GM10248 (cell line): ENCODE measurements at regions of chr3 and their contacts with region 1.

Region 1: DNA sequence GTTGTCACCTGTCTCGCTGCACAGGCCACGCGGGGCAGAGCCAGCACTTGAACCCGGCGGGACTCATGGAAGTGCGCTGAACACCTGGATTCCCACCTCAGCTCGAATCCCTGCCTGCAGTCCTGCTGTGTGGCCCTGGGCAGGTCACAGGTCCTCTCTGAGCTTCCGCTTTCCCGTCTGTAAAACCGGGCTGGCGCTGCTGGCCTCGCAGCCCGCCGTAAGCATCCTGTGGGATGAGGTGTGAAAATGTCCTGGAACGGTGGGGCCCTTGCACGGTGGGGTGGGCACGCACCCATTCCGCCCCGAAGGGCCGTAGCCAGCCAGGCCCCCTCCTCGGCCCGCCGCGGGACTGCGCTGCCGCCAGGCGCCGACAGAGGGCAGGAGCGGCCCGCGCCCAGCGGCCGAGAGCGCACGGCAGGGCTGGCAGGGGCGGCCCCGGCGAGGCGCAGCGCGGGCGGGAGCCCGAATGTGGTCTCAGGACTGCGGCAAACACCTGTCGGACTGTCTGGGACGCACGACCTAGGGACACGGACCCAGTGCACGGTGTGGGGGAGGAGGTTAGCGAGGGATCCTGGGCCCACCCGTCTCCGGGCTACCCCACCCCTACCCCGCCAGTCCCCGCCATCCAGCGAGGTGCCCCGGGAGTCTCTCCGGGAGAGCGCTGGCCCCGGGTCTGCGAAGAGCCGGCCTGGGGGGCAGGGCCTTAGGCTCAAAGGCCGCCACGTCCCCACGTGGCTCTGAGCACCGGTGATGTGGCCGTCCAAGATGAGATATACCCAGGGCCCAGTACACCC is 40.4 kb downstream of the DNAJB8 start:
- DNase-seq: peak; percentile 93
- CTCF ChIP-seq: peak; percentile 99

Region 2: DNA sequence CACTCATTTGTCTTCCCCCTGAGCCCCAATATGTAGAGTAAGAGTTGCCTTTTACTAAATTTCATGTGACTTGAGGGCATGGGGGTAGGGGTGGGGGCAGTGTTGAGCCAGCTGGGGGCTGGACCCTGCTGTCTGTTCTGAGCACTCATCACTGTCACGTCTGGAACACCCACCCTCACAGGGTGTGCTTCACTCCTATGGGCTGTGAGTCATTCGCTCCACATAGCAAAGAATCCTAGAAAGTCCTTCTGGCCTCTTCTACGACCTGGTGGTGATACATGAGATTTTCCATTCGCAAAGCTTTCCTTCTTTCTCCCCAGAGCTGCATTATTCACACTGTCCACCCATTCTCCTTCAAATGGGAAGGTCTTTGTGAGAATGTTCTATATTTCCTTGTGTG is 560.4 kb before region 1 on chr3:
- CTCF ChIA-PET with region 1: no interaction called
- POLR2A ChIA-PET with region 1: no interaction called
- DNase-seq: no peak
- CTCF ChIP-seq: no peak

Region 3: GRCh38 chr3:128497387-128498126 is 71.2 kb after region 1 on chr3:
- CTCF ChIA-PET with region 1: interaction called, 21 read pairs
- POLR2A ChIA-PET with region 1: no interaction called
- DNase-seq: peak; percentile 76
- CTCF ChIP-seq: peak; percentile 78

Region 4: DNA sequence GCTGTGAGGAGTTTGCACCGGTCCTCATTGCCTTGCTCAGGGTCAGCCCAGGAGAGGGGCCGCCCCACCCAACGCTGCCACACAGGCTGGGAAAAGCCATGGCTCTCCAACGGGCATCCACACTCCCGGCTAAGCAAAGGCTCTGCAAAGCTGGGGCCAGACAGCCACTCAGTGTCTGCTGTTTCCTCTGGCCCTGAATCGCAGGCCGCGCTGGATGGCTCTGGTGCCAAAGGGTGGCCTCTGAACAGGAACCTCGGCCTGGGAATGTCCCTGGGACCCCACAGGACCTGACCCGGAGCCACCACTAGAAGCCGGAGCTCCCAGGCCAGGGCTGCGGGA is 181.4 kb after region 1 on chr3:
- CTCF ChIA-PET with region 1: interaction called, 69 read pairs
- POLR2A ChIA-PET with region 1: no interaction called
- DNase-seq: no peak
- CTCF ChIP-seq: no peak